CD4-positive, alpha-beta T cell (primary cell): ENCODE measurements at regions of chr20 and their contacts with region 1.

Region 1: DNA sequence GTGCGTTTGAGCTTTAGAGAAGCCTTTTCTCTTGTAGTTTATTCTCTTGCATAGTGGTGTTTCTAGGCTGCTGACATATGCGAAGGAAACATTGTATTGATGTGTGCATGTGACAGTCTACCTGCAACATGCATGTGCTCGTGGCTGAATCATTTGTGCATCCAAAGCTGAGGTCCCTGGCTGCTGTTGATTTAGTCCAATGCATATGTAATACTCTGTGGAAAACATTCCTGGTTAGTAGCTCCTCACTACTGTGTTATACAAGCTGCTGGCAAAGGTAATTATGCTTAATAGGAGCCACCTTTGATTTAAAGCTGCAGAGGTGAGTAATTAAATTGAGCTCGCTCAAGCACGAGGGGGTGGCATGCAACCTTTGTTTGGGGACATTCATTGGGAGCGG is 24.5 kb downstream of the TSHZ2 start:
- DNase-seq: no peak
- ATAC-seq: no peak
- H3K4me3 ChIP-seq: no peak overlapping the region
- H3K4me3 Mint-ChIP-seq: no peak overlapping the region
- H3K27ac ChIP-seq: no peak overlapping the region
- H3K27ac Mint-ChIP-seq: peak overlapping the region; percentile 5
- H3K4me1 ChIP-seq: no peaks in the 10 kb centered on the region
- H3K4me1 Mint-ChIP-seq: peaks cover 47% of the 10 kb centered on the region
- H3K27me3 ChIP-seq: no peaks in the 10 kb centered on the region
- H3K27me3 Mint-ChIP-seq: no peaks in the 10 kb centered on the region
- CTCF ChIP-seq: no peak

Region 2: GRCh38 chr20:52978851-52979250 is 17.8 kb before region 1 on chr20:
- CTCF ChIA-PET with region 1: interaction called, 3 read pairs
- POLR2A ChIA-PET with region 1: interaction called, 120 read pairs
- intact Hi-C with region 1: loop called in 1 of 2 experiments (anchors 2 kb)
- DNase-seq: no peak
- ATAC-seq: no peak
- H3K4me3 ChIP-seq: no peak overlapping the region
- H3K4me3 Mint-ChIP-seq: peak overlapping the region; percentile 50
- H3K27ac ChIP-seq: no peak overlapping the region
- H3K27ac Mint-ChIP-seq: peak overlapping the region; percentile 84
- H3K4me1 ChIP-seq: no peaks in the 10 kb centered on the region
- H3K4me1 Mint-ChIP-seq: peaks cover 78% of the 10 kb centered on the region
- H3K27me3 ChIP-seq: no peaks in the 10 kb centered on the region
- H3K27me3 Mint-ChIP-seq: no peaks in the 10 kb centered on the region
- CTCF ChIP-seq: no peak